Naive thymus-derived CD4-positive, alpha-beta T cell (primary cell): ENCODE measurements at regions of chr12 and their contacts with region 1.

Region 1: DNA sequence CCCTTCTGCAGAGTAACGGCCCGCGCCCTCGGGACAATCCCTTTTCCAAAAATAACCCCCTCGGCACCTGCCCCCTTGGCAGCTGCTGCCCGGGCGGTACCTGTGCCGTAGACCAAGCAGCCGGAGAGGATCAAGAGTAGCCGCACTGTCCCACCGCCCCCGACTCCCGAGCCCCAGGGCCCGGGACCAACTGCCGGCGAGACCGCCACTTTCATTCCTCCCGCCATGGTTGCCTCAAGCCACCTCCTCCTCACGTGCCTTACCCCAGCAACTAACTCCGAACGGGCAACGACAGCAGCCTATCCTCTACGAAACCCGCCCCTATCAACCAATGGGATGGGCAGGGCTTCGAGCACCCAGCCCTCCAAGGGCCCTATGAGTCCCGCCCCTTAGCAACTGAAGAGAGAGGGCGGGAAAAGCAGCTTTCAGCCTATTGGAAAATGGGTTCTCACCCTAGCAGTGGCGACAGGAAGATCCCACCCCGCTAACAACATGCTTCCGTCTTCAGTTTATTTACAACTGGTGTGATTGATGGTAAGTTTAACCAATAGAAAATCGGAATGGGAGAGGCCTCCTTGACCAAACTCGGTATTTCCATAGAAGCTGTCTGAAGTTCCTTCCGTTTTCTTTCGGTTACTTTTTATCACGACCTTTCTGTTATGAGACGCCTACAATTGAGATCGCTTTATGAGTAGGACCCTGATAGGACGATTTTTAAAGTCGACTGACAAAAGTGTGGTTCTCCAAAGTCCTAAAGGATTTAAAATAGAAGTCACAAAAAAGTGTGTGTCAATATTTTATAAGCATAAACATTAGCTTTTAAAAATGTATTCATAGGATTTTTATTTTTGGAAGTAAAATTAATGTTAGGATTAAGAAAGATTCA is at the start of gene NEMP1:
- DNase-seq: peak; percentile 65 to 99 (median 98)
- ATAC-seq: peak; percentile 98
- H3K4me3 ChIP-seq: peak within 1 kb of the TSS; percentile 84
- H3K4me3 Mint-ChIP-seq: peak within 1 kb of the TSS; percentile 86 to 99 (median 94)
- H3K27ac ChIP-seq: peak within 1 kb of the TSS; percentile 85
- H3K27ac Mint-ChIP-seq: peak within 1 kb of the TSS; percentile 89 to 99 (median 92)
- H3K4me1 ChIP-seq: peaks cover 6 to 7% of the 10 kb centered on the region in 2 donors
- H3K4me1 Mint-ChIP-seq: peaks cover 0 to 49% (median 25%) of the 10 kb centered on the region in 7 donors
- H3K27me3 ChIP-seq: no peaks in the 10 kb centered on the region
- H3K27me3 Mint-ChIP-seq: no peaks in the 10 kb centered on the region
- total RNA-seq, gene NEMP1: 13.1 to 47.6 (median 29.3) TPM

Region 2: GRCh38 chr12:56645717-56646446 is 432.9 kb before region 1 on chr12 and contains the start of gene ATP5F1B:
- CTCF ChIA-PET with region 1: no interaction called
- POLR2A ChIA-PET with region 1: interaction called, 10 read pairs
- intact Hi-C with region 1: no loop called
- DNase-seq: peak; percentile 65 to 97 (median 93)
- ATAC-seq: peak; percentile 97
- H3K4me3 ChIP-seq: peak within 1 kb of the TSS; percentile 83
- H3K4me3 Mint-ChIP-seq: peak within 1 kb of the TSS; percentile 82 to 98 (median 94)
- H3K27ac ChIP-seq: peak within 1 kb of the TSS; percentile 93
- H3K27ac Mint-ChIP-seq: peak within 1 kb of the TSS; percentile 97 to 100 (median 99)
- H3K4me1 ChIP-seq: peaks cover 4 to 21% of the 10 kb centered on the region in 2 donors
- H3K4me1 Mint-ChIP-seq: peaks cover 17 to 39% (median 34%) of the 10 kb centered on the region in 7 donors
- H3K27me3 ChIP-seq: no peaks in the 10 kb centered on the region
- H3K27me3 Mint-ChIP-seq: no peaks in the 10 kb centered on the region
- total RNA-seq, gene ATP5F1B: 217 to 476 (median 267) TPM

Region 3: DNA sequence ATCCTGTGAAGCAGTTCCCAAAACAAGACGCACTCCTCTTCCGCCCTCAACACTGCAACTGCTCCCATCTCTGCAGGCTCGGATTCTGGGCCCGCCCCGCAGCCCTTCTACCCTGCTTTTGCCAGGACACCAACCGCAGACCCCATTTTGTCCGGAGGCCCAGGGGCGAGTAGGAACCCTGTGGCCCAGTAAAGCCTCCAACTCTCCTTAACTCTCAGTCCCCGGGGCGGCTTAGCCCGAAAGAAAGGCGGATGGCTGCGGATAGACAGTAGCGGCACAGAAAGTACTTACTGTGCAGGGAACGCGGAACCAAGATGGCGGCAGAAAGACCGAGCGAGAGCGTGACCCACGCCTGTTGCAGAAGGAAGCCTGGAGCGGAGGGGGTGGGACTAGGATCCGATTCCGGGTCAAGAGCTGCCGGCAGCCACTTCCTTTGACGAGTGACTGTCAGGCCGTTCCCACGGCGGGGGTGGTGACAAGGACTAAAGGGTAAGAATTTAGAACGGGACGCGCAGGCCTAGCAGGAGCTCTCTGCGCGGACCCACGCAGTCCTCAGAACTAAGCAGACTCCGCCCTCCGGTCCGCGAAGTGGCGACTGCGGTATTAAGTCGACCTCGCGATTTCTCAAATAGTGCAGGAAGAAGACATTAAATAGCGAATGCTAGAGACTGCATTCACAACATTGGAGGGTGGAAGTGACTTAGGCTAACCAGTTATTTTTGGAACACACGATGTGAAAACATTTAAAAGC is 353.6 kb before region 1 on chr12 and contains the start of gene NACA:
- CTCF ChIA-PET with region 1: no interaction called
- POLR2A ChIA-PET with region 1: no interaction called
- intact Hi-C with region 1: loop called (anchors 1 to 2 kb)
- DNase-seq: peak; percentile 85 to 99 (median 96)
- ATAC-seq: peak; percentile 95
- H3K4me3 ChIP-seq: peak within 1 kb of the TSS; percentile 100
- H3K4me3 Mint-ChIP-seq: peak within 1 kb of the TSS; percentile 94 to 100 (median 97)
- H3K27ac ChIP-seq: peak within 1 kb of the TSS; percentile 87
- H3K27ac Mint-ChIP-seq: peak within 1 kb of the TSS; percentile 94 to 100 (median 98)
- H3K4me1 ChIP-seq: peaks cover 40 to 43% of the 10 kb centered on the region in 2 donors
- H3K4me1 Mint-ChIP-seq: peaks cover 39 to 53% (median 49%) of the 10 kb centered on the region in 7 donors
- H3K27me3 ChIP-seq: no peaks in the 10 kb centered on the region
- H3K27me3 Mint-ChIP-seq: no peaks in the 10 kb centered on the region
- total RNA-seq, gene NACA: 834 to 1,486 (median 1,355) TPM

Region 4: GRCh38 chr12:57012600-57013465 is 65.9 kb before region 1 on chr12:
- CTCF ChIA-PET with region 1: no interaction called
- POLR2A ChIA-PET with region 1: interaction called, 14 read pairs
- intact Hi-C with region 1: no loop called
- DNase-seq: no peak
- ATAC-seq: no peak
- H3K4me3 ChIP-seq: no peak overlapping the region
- H3K4me3 Mint-ChIP-seq: peak overlapping the region in 3 of 10 donors; percentile 45 to 57 (median 48)
- H3K27ac ChIP-seq: no peak overlapping the region
- H3K27ac Mint-ChIP-seq: peak overlapping the region in 7 of 9 donors; percentile 14 to 95 (median 76)
- H3K4me1 ChIP-seq: peaks cover 5 to 35% of the 10 kb centered on the region in 2 donors
- H3K4me1 Mint-ChIP-seq: peaks cover 18 to 72% (median 55%) of the 10 kb centered on the region in 7 donors
- H3K27me3 ChIP-seq: no peaks in the 10 kb centered on the region
- H3K27me3 Mint-ChIP-seq: peaks cover 0 to 14% (median 0%) of the 10 kb centered on the region in 5 donors

Region 5: GRCh38 chr12:57096099-57096572 is 17.4 kb after region 1 on chr12:
- CTCF ChIA-PET with region 1: interaction called, 15 read pairs
- POLR2A ChIA-PET with region 1: interaction called, 92 read pairs
- intact Hi-C with region 1: no loop called
- DNase-seq: no peak
- ATAC-seq: no peak
- H3K4me3 ChIP-seq: no peak overlapping the region
- H3K4me3 Mint-ChIP-seq: peak overlapping the region in 1 of 10 donors; percentile 11
- H3K27ac ChIP-seq: peak overlapping the region; percentile 83
- H3K27ac Mint-ChIP-seq: peak overlapping the region in 8 of 9 donors; percentile 47 to 94 (median 64)
- H3K4me1 ChIP-seq: peaks cover 7 to 32% of the 10 kb centered on the region in 2 donors
- H3K4me1 Mint-ChIP-seq: peaks cover 33 to 62% (median 51%) of the 10 kb centered on the region in 7 donors
- H3K27me3 ChIP-seq: no peaks in the 10 kb centered on the region
- H3K27me3 Mint-ChIP-seq: no peaks in the 10 kb centered on the region

Region 6: DNA sequence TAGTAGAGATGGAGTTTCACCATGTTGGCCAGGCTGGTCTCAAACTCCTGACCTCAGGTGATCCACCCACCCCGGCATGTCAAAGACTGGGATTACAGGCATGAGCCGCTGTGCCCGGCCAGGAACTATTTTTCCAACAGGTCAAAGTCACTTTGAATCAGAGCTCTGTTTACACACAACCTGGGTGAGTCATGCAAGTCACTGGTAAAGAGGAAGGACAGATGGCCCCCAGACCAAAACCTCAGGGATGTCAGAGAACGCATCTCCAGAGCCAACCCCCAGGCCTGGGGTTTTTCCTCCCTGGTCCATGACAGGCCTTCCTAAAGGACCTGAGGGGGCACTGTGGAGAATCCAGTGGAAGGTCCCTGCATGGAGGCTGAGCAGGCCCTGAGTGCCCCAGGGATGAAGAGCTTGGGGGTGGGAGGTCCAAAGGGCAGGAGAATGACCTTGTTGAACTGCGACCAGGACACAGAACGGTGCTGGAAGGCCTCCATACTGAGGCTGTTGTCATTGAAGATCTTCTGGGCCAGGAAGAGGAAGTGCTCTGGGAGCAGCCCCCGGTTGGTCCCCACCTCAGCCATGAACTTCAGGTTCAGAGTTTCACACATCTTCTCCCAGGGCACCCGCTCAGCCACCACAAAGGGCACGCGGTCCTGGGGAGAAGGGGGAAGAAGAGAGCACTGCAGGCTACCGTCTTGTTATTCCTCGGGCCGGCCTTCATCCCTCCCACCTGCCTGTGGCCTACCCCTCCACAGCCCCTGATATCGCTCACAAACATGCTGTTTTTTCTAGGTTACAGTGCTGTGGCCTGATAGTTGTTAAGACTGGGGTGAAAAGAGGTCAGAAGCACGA is 23.3 kb after region 1 on chr12:
- CTCF ChIA-PET with region 1: interaction called, 212 read pairs
- POLR2A ChIA-PET with region 1: interaction called, 294 read pairs
- intact Hi-C with region 1: no loop called
- DNase-seq: no peak
- ATAC-seq: peak; percentile 31
- H3K4me3 ChIP-seq: no peak overlapping the region
- H3K4me3 Mint-ChIP-seq: peak overlapping the region in 1 of 10 donors; percentile 52
- H3K27ac ChIP-seq: peak overlapping the region; percentile 43
- H3K27ac Mint-ChIP-seq: peak overlapping the region in 8 of 9 donors; percentile 13 to 84 (median 72)
- H3K4me1 ChIP-seq: no peaks in the 10 kb centered on the region
- H3K4me1 Mint-ChIP-seq: peaks cover 28 to 67% (median 40%) of the 10 kb centered on the region in 7 donors
- H3K27me3 ChIP-seq: no peaks in the 10 kb centered on the region
- H3K27me3 Mint-ChIP-seq: no peaks in the 10 kb centered on the region

Region 7: DNA sequence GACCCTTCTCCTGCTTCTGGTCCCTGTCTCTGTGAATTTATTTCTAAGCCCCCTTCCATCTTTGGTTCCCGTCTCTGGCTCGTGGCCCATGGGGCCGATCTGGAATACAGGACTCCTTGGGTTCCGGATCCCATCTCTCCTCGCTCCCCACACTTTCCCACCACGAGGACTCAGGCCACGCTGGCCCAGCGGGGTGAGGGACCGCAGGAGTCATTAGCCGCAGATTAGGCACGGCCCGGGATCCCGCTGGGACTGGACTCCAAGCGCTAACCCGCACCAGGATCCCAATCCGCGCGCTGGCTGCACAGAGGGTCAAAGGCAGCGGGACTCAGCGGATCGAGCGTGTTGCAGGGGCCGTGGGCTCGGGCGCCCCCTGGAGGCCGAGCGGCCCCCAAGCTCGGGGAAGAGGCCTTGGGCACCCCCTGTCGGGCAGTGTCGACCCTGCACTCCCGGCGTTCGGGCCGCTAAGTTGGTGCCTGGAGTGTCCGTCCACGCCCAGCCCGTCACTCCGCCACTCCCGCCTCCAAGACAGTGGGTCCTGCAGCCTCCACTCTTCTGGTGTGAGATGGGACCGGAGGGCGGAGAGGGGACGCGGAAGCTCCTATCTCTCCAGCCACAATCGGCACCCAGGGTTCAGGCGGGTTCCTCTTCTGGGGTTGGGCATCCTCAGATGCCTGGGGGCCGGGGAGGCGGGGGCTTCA is 160.2 kb after region 1 on chr12:
- CTCF ChIA-PET with region 1: no interaction called
- POLR2A ChIA-PET with region 1: no interaction called
- intact Hi-C with region 1: loop called in 1 of 2 experiments (anchors 5 kb)
- DNase-seq: peak; percentile 72 to 94 (median 85)
- ATAC-seq: peak; percentile 89
- H3K4me3 ChIP-seq: peak overlapping the region; percentile 80
- H3K4me3 Mint-ChIP-seq: peak overlapping the region; percentile 87 to 99 (median 95)
- H3K27ac ChIP-seq: no peak overlapping the region
- H3K27ac Mint-ChIP-seq: peak overlapping the region in 6 of 9 donors; percentile 24 to 83 (median 64)
- H3K4me1 ChIP-seq: peaks cover 45 to 70% of the 10 kb centered on the region in 2 donors
- H3K4me1 Mint-ChIP-seq: peaks cover 52 to 82% (median 66%) of the 10 kb centered on the region in 7 donors
- H3K27me3 ChIP-seq: peaks cover 7 to 18% of the 10 kb centered on the region in 2 donors
- H3K27me3 Mint-ChIP-seq: peaks cover 48 to 72% (median 55%) of the 10 kb centered on the region in 5 donors